Activated CD4-positive, alpha-beta T cell treated with anti-CD3 and anti-CD28 coated beads, Interleukin-2, amount 10 ng/mL, durations not matched to agents 24 days and 14 days (primary cell): ENCODE measurements at regions of chr1 and their contacts with region 1.

Region 1: GRCh38 chr1:235317168-235317567 is 10.8 kb downstream of the ARID4B start:
- DNase-seq: no peak
- H3K4me3 Mint-ChIP-seq: peak overlapping the region; percentile 41
- H3K27ac Mint-ChIP-seq: peak overlapping the region; percentile 73
- H3K4me1 Mint-ChIP-seq: peaks cover 67% of the 10 kb centered on the region
- H3K27me3 Mint-ChIP-seq: no peaks in the 10 kb centered on the region

Region 2: GRCh38 chr1:235295902-235296376 is 21.2 kb before region 1 on chr1:
- intact Hi-C with region 1: loop called (anchors 2 kb)
- DNase-seq: no peak
- H3K4me3 Mint-ChIP-seq: no peak overlapping the region
- H3K27ac Mint-ChIP-seq: no peak overlapping the region
- H3K4me1 Mint-ChIP-seq: peaks cover 40% of the 10 kb centered on the region
- H3K27me3 Mint-ChIP-seq: no peaks in the 10 kb centered on the region